ENCODE measurements at regions of chrX and their contacts with region 1.

Region 1: DNA sequence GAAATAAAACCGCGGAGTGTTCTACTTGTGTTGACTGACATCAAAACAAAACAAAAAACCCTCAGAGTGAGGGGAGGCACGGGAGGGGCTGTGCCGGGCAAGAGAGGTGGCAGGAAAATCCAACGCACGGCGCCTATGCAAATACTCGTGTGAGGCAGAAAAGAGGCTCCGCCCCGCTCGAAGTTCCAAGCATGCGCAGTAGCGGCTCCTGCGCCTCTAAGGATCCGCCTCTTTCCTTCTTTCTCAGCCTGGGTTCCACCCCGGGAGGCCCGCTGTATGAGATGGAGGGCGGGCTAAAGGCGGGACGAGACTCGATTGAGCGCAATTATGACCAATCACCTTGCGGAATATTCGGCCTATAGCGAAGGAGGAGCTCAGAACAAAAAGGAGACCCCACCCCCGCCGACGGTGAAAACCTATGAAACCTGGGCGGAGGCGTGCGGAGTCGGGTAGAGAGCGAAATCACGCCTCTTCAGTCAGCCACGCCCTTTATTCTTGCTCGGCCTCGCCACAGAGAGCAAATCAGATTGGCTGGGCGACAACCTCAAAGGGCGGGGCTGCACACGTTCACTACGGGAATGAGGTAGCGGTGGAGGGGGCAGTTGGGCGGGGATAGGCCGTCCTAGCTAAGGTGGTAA is 720 bp upstream of the CDK16 start:
- DNase-seq: peak; percentile 95
- H3K4me3 Mint-ChIP-seq: peak overlapping the region; percentile 85
- H3K27ac Mint-ChIP-seq: peak overlapping the region; percentile 97
- H3K4me1 Mint-ChIP-seq: peaks cover 43% of the 10 kb centered on the region
- H3K27me3 Mint-ChIP-seq: no peaks in the 10 kb centered on the region

Region 2: GRCh38 chrX:47233337-47234113 is 15.8 kb after region 1 on chrX:
- CTCF ChIA-PET with region 1: interaction called, 4 read pairs
- POLR2A ChIA-PET with region 1: interaction called, 53 read pairs
- DNase-seq: peak; percentile 93
- H3K4me3 Mint-ChIP-seq: peak overlapping the region; percentile 84
- H3K27ac Mint-ChIP-seq: peak overlapping the region; percentile 98
- H3K4me1 Mint-ChIP-seq: peaks cover 12% of the 10 kb centered on the region
- H3K27me3 Mint-ChIP-seq: no peaks in the 10 kb centered on the region

Measured in activated CD4-positive, alpha-beta memory T cell treated with anti-CD3 and anti-CD28 coated beads, Interleukin-2, amount 10 ng/mL, durations not matched to agents 7 days and 5 days (primary cell).